ENCODE measurements at regions of chr12 and their contacts with region 1.

Region 1: DNA sequence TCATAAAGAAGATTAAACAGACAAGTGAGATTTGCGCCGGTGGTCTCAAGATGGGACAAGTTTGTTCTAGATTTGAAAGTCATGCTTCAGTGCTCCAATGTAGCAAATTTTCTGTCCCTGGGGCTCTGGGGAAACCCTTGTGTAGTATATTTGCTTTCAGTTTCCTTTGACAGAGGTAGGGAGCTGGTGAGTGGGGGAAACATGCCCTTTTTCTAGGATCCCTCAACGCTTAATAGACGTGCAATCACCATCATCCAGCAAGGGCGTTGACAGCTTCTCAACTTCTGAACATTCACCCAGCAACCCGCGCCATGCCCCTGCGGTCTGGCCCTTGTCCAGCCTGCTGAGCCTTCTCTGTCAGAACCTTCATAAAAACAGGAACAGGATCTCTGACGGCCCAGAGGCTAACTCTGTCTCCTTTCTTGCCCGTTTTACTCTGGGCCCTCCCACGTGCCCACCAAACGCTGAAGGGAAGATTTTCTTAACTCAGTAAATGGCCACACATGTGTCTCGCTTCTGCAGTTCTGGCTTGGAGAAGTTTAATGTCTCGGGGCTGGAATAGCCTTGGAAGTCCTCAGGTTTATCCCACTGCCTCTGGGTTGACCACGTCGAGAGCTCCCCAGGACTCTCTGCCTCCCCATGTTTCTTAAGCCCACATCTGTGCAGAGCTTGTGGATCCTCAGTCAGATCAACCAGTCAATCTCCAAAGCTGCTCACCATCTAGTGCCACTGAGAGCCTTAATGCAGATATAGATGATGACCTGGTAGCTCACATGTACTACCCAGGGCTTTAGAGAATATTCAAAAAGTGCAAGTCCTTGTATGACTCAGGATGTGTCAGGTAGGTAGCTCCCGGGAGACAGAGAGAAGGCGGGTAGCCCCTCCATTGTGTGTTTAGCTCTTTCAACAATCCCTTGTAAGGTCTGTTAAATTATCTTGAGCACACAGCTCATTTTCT is 58.1 kb upstream of the CCND2 start:
- DNase-seq: peak; percentile 79
- H3K4me3 Mint-ChIP-seq: peak overlapping the region; percentile 60
- H3K27ac Mint-ChIP-seq: peak overlapping the region; percentile 91
- H3K4me1 Mint-ChIP-seq: peaks cover 33% of the 10 kb centered on the region
- H3K27me3 Mint-ChIP-seq: no peaks in the 10 kb centered on the region

Region 2: GRCh38 chr12:3872800-3873636 is 342.5 kb before region 1 on chr12 and contains the start of gene PARP11:
- CTCF ChIA-PET with region 1: no interaction called
- intact Hi-C with region 1: no loop called
- DNase-seq: peak; percentile 99
- H3K4me3 Mint-ChIP-seq: peak within 1 kb of the TSS; percentile 87
- H3K27ac Mint-ChIP-seq: peak within 1 kb of the TSS; percentile 96
- H3K4me1 Mint-ChIP-seq: peaks cover 38% of the 10 kb centered on the region
- H3K27me3 Mint-ChIP-seq: no peaks in the 10 kb centered on the region
- total RNA-seq, gene PARP11: 19.9 to 20.7 TPM

Region 3: GRCh38 chr12:3913278-3913677 is 302.2 kb before region 1 on chr12:
- CTCF ChIA-PET with region 1: no interaction called
- intact Hi-C with region 1: no loop called
- DNase-seq: peak; percentile 26
- H3K4me3 Mint-ChIP-seq: no peak overlapping the region
- H3K27ac Mint-ChIP-seq: peak overlapping the region; percentile 33
- H3K4me1 Mint-ChIP-seq: peaks cover 23% of the 10 kb centered on the region
- H3K27me3 Mint-ChIP-seq: no peaks in the 10 kb centered on the region

Region 4: DNA sequence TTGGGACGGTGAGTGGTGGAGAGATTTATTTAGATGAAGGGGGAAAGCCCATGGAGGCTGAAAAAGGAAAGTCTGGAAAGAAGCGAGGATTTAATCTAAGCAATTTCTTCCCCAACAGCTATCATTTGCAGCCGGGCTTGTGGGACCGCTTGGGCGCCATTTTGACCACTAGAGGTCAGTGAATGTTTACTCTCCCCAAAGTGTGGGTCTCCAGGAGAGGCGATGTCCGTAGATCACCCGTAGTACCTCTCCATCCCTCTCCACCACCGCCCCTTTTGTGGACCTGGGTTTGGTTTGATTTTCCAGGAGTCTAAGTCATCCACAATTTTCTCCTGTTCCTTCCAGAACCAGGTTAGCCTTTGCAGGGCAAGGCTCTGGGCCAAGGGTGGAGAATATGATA is 251.1 kb before region 1 on chr12:
- CTCF ChIA-PET with region 1: no interaction called
- intact Hi-C with region 1: no loop called
- DNase-seq: peak; percentile 48
- H3K4me3 Mint-ChIP-seq: no peak overlapping the region
- H3K27ac Mint-ChIP-seq: no peak overlapping the region
- H3K4me1 Mint-ChIP-seq: peaks cover 20% of the 10 kb centered on the region
- H3K27me3 Mint-ChIP-seq: no peaks in the 10 kb centered on the region

Region 5: GRCh38 chr12:4064008-4064407 is 151.5 kb before region 1 on chr12:
- CTCF ChIA-PET with region 1: no interaction called
- intact Hi-C with region 1: loop called (anchors 5 kb)
- DNase-seq: no peak
- H3K4me3 Mint-ChIP-seq: no peak overlapping the region
- H3K27ac Mint-ChIP-seq: peak overlapping the region; percentile 58
- H3K4me1 Mint-ChIP-seq: peaks cover 30% of the 10 kb centered on the region
- H3K27me3 Mint-ChIP-seq: no peaks in the 10 kb centered on the region

Region 6: GRCh38 chr12:4178424-4179170 is 36.9 kb before region 1 on chr12:
- CTCF ChIA-PET with region 1: interaction called, 5 read pairs
- intact Hi-C with region 1: loop called (anchors 1 kb)
- DNase-seq: peak; percentile 64
- H3K4me3 Mint-ChIP-seq: peak overlapping the region; percentile 14
- H3K27ac Mint-ChIP-seq: peak overlapping the region; percentile 87
- H3K4me1 Mint-ChIP-seq: peaks cover 21% of the 10 kb centered on the region
- H3K27me3 Mint-ChIP-seq: no peaks in the 10 kb centered on the region

Region 7: GRCh38 chr12:4269279-4269991 is 53.9 kb after region 1 on chr12:
- CTCF ChIA-PET with region 1: interaction called, 10 read pairs
- intact Hi-C with region 1: loop called (anchors 1 kb)
- DNase-seq: peak; percentile 99
- H3K4me3 Mint-ChIP-seq: peak overlapping the region; percentile 99
- H3K27ac Mint-ChIP-seq: peak overlapping the region; percentile 99
- H3K4me1 Mint-ChIP-seq: peaks cover 20% of the 10 kb centered on the region
- H3K27me3 Mint-ChIP-seq: no peaks in the 10 kb centered on the region

Measured in activated naive CD4-positive, alpha-beta T cell treated with anti-CD3 and anti-CD28 coated beads for 36 hours (primary cell).